GM10248 (cell line): ENCODE measurements at regions of chr7 and their contacts with region 1.

Region 1: DNA sequence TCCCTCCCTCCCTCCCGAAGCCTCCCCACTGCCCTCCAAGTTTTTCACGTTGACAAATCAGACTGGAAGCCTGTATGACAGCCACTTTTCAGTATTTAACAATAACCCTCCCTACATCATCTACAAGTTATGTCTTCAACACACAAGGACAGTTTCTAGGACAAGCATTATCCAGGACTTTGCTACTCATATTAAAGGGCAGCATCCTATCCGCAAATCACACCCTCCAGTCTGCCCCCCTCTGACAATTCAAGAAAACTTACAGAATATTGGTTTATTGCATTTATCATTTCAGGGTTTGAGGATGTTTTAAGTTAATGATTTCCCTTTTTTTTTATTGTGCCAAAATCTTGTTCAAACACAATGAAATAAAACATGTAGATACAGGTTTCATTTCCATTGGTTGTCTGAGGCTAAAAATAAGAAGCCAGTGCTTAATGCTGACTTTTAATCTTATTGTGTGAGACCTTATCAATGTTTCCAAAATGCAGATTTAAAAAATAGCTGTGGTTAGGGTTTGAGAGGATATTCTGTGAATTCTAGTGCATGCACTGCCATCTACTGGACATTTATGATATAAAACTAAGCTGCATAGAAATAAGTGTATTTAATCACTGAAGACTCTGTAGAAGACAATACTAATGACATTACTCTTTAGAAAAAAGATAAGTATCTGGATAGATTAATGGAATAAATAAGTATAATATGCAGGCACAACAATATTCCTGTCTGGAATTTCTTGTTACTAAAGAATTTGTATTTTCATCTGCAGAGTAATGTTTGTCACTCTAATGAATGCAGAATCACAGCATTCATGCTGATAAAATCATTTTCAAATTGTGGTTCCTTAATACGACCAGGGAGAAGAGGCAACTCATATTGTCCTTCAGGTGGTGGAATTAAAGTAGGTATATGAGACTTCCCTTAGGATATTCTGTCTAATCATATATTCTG is 64.1 kb downstream of the CAV1 start:
- DNase-seq: no peak
- CTCF ChIP-seq: peak; percentile 66

Region 2: DNA sequence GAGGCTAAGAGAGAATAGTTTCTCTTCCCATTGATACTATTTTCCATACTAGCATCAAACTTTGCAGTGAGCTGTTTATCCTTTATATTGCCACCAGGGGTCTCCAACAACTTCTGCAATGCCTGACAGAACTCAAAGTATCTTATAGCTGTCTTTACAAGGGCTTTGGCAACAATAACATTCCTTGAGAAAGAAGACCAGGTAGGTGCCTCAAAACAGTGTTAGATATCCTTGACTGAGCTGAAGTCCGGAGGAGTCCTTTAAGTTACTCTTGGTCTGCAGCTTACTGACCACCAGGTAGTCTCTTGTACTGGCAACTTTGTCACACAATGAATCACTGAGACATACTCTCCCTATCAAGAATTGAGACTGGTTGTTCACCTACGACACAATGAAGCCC is 408.6 kb before region 1 on chr7:
- CTCF ChIA-PET with region 1: interaction called, 40 read pairs
- POLR2A ChIA-PET with region 1: no interaction called
- DNase-seq: peak; percentile 59
- CTCF ChIP-seq: peak; percentile 70

Region 3: GRCh38 chr7:116284390-116284789 is 304.5 kb before region 1 on chr7:
- CTCF ChIA-PET with region 1: no interaction called
- POLR2A ChIA-PET with region 1: no interaction called
- DNase-seq: no peak
- CTCF ChIP-seq: no peak

Region 4: GRCh38 chr7:116525913-116526861 is 62.7 kb before region 1 on chr7:
- CTCF ChIA-PET with region 1: interaction called, 18 read pairs
- POLR2A ChIA-PET with region 1: no interaction called
- DNase-seq: peak; percentile 91
- CTCF ChIP-seq: peak; percentile 90

Region 5: DNA sequence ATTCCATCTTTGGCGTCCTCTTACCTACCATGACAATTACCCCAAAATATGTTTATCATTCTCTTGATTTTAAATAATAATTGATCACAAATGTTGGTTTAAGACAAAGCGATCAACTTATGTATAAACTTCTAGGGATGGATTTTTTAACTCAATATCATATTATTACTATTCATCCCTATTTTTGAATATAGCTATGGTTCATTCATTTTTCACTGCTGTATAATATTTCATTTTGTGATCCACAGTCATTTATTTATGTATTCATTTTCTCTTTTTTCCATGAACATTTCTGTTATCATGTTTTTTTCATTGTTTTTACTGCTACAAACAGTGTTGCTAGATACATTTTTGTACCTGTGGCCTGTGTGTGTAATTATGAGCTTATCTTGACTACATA is 21.8 kb after region 1 on chr7:
- CTCF ChIA-PET with region 1: interaction called, 70 read pairs
- POLR2A ChIA-PET with region 1: no interaction called
- DNase-seq: no peak
- CTCF ChIP-seq: no peak

Region 6: DNA sequence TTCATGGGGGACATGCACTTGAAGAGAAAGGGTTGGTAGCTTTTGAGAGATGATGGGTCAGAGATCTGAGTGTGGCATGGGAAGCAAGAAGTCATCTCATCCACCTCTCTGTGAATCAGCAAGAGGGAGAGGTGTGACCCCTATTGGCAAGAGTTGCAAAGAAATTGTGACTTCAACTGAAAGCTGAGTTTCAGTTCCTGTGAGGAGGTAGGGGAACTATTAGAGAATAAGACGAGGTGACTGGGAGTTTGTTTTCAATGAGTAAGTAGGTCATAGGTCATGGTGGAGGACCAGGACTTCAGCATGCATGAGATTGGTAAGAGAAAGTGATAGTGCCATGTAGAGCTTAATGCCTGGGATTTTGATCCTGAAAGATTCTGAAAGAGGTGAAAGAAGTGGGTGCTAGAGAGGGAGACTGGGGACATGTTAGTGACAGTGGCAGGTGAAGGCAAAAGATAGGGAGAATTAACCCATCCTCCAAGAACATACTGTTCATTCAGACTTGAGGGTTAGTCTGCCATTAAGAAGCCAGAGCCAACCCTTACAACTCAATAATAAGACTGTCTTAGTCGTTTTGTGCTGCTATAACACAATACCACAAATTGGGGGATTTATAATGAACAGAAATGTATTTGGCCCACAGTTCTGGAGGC is 198.0 kb after region 1 on chr7:
- CTCF ChIA-PET with region 1: interaction called, 27 read pairs
- POLR2A ChIA-PET with region 1: no interaction called
- DNase-seq: peak; percentile 75
- CTCF ChIP-seq: peak; percentile 69